B cell (primary cell): ENCODE measurements at regions of chr6 and their contacts with region 1.

Region 1: DNA sequence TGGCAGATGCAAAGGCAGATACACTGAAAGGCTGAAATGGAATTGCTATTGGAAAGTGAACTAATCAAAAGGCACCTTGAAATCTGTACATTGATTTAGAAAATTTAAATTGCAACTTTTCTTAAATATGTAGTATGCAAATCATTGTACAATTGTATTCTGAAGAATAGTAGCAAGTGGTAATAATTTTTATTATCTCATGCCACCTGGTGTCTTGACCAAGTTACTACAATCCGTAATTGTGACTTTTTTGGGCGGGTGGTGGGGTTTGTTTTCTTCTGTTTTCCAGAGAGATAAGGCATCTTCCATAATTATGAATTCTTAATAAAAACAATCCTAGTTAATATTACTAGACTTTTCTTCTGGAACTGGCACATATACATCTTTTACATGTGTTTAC is 12.5 kb upstream of the BCKDHB start:
- DNase-seq: peak; percentile 41
- ATAC-seq: peak; percentile 41
- H3K4me3 ChIP-seq: no peak overlapping the region
- H3K4me3 Mint-ChIP-seq: no peak overlapping the region
- H3K27ac ChIP-seq: no peak overlapping the region
- H3K27ac Mint-ChIP-seq: no peak overlapping the region
- H3K4me1 ChIP-seq: peaks cover 0 to 3% of the 10 kb centered on the region in 2 donors
- H3K4me1 Mint-ChIP-seq: peaks cover under 1% of the 10 kb centered on the region
- H3K27me3 ChIP-seq: peaks cover 0 to 4% (median 0%) of the 10 kb centered on the region in 4 experiments
- H3K27me3 Mint-ChIP-seq: peaks cover 27% of the 10 kb centered on the region
- CTCF ChIP-seq: peak; percentile 77

Region 2: GRCh38 chr6:79949233-79949632 is 144.8 kb before region 1 on chr6:
- CTCF ChIA-PET with region 1: interaction called, 17 read pairs
- POLR2A ChIA-PET with region 1: no interaction called
- intact Hi-C with region 1: loop called (anchors 1 kb)
- DNase-seq: peak; percentile 63
- ATAC-seq: no peak
- H3K4me3 ChIP-seq: no peak overlapping the region
- H3K4me3 Mint-ChIP-seq: no peak overlapping the region
- H3K27ac ChIP-seq: no peak overlapping the region
- H3K27ac Mint-ChIP-seq: no peak overlapping the region
- H3K4me1 ChIP-seq: peaks cover 18 to 21% of the 10 kb centered on the region in 2 donors
- H3K4me1 Mint-ChIP-seq: peaks cover 19% of the 10 kb centered on the region
- H3K27me3 ChIP-seq: peaks cover 0 to 42% (median 36%) of the 10 kb centered on the region in 4 experiments
- H3K27me3 Mint-ChIP-seq: peaks cover 50% of the 10 kb centered on the region
- CTCF ChIP-seq: peak; percentile 61

Region 3: GRCh38 chr6:80579391-80580023 is 485.5 kb after region 1 on chr6:
- CTCF ChIA-PET with region 1: no interaction called
- POLR2A ChIA-PET with region 1: no interaction called
- intact Hi-C with region 1: no loop called
- DNase-seq: no peak
- ATAC-seq: no peak
- H3K4me3 ChIP-seq: no peak overlapping the region
- H3K4me3 Mint-ChIP-seq: no peak overlapping the region
- H3K27ac ChIP-seq: no peak overlapping the region
- H3K27ac Mint-ChIP-seq: no peak overlapping the region
- H3K4me1 ChIP-seq: no peaks in the 10 kb centered on the region
- H3K4me1 Mint-ChIP-seq: no peaks in the 10 kb centered on the region
- H3K27me3 ChIP-seq: no peaks in the 10 kb centered on the region
- H3K27me3 Mint-ChIP-seq: no peaks in the 10 kb centered on the region
- CTCF ChIP-seq: no peak